ENCODE measurements at regions of chr1 and their contacts with region 1.

Region 1: GRCh38 chr1:240169188-240169587 is 77.5 kb downstream of the FMN2 start:
- DNase-seq: peak in 2 of 3 donors; percentile 10 to 11
- H3K4me3 ChIP-seq: no peak overlapping the region
- H3K27ac ChIP-seq: no peak overlapping the region
- H3K4me1 ChIP-seq: no peaks in the 10 kb centered on the region
- H3K27me3 ChIP-seq: peaks cover 0 to 5% (median 0%) of the 10 kb centered on the region in 5 experiments

Region 2: GRCh38 chr1:240027059-240027462 is 142.1 kb before region 1 on chr1:
- CTCF ChIA-PET with region 1: interaction called, 11 read pairs
- POLR2A ChIA-PET with region 1: no interaction called
- DNase-seq: peak; percentile 26 to 67 (median 56)
- H3K4me3 ChIP-seq: no peak overlapping the region
- H3K27ac ChIP-seq: no peak overlapping the region
- H3K4me1 ChIP-seq: no peaks in the 10 kb centered on the region
- H3K27me3 ChIP-seq: peaks cover 0 to 3% (median 0%) of the 10 kb centered on the region in 5 experiments

Region 3: DNA sequence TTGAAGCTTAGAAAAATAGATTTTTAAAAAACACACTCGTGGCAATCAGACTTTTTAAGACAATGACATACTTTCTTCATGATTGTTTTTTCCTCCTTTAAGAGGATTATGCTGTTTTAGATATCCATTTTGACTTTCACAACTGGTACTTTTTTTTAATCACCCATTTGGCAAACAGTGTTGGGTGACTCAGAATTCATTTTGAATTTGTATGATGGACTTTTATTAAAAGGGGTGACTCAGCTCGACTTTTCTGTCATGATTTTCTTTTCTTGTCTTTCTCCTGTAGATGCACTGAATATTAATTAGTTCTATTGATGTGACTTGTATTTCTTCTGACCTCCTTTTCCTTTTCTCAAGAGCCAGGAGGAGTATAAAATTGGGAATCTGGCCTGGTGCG is 32.8 kb before region 1 on chr1:
- CTCF ChIA-PET with region 1: no interaction called
- POLR2A ChIA-PET with region 1: no interaction called
- DNase-seq: no peak
- H3K4me3 ChIP-seq: no peak overlapping the region
- H3K27ac ChIP-seq: no peak overlapping the region
- H3K4me1 ChIP-seq: no peaks in the 10 kb centered on the region
- H3K27me3 ChIP-seq: peaks cover 0 to 20% (median 0%) of the 10 kb centered on the region in 5 experiments